Right cardiac atrium (tissue), 5 donors: ENCODE measurements at regions of chr17 and their contacts with region 1.

Region 1: GRCh38 chr17:17001874-17002520 is 30.1 kb upstream of the TNFRSF13B start:
- DNase-seq: peak; percentile 83 to 91 (median 91)
- ATAC-seq: peak; percentile 85 to 87
- H3K4me3 ChIP-seq: no peak overlapping the region
- H3K27ac ChIP-seq: no peak overlapping the region
- H3K4me1 ChIP-seq: no peaks in the 10 kb centered on the region
- H3K27me3 ChIP-seq: no peaks in the 10 kb centered on the region

Region 2: DNA sequence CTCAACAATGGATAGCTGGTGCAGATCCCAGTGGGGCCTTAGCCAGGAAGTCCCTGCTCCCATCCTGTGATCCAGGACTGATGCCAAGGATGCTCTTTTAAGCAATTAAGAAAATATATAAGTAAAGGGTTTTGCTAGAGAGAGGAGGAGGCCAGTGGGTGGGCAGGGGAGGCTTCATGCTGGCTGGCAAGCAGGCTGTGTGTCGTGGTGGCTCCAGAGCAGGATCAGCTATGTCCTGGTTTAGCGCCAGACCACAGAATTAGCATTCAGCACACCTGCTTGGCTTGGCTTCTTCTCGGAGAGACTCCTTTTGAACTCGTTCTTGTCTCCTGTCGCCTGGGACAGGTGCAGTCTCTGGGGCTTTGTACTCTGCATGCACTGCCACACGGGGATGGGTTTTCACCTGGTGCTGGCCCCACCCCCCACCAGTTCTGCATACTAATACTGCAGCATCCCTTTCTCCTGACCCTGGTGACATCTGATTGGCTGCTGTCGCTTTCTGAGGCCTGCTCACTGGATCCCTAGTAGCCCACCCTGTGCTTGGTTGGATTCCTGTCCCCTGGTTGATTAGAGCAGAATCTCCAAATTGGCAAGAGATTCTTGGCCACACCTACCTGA is 138.1 kb after region 1 on chr17:
- intact Hi-C with region 1: loop called in 1 of 4 experiments (anchors 10 kb)
- DNase-seq: peak in 2 of 3 donors; percentile 30 to 39
- ATAC-seq: no peak
- H3K4me3 ChIP-seq: no peak overlapping the region
- H3K27ac ChIP-seq: no peak overlapping the region
- H3K4me1 ChIP-seq: no peaks in the 10 kb centered on the region
- H3K27me3 ChIP-seq: no peaks in the 10 kb centered on the region

Region 3: GRCh38 chr17:17313350-17313991 is 311.5 kb after region 1 on chr17:
- intact Hi-C with region 1: loop called in 1 of 4 experiments (anchors 5 kb)
- DNase-seq: peak in 2 of 3 donors; percentile 25 to 54
- ATAC-seq: peak; percentile 57 to 61
- H3K4me3 ChIP-seq: no peak overlapping the region
- H3K27ac ChIP-seq: no peak overlapping the region
- H3K4me1 ChIP-seq: no peaks in the 10 kb centered on the region
- H3K27me3 ChIP-seq: no peaks in the 10 kb centered on the region